ENCODE measurements at regions of chr16 and their contacts with region 1.

Region 1: DNA sequence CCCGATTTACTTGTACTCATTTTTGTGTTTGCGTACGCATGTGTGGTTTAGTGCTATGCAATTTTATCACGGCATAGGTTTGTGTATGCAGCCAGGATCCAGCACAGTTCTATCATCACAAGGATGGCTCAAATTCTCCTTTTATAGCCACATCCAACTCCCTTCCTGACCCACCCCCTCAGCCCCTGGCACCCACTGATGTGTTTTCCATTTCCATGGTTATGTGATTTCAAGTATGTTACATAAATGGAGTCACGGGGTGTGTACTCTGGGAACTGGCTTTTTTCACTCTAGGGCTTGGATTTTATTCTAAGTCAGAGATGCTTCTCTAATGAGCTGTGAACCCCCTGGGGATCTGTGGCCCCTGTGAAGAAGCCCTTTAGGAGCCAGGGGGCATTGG is 16.8 kb downstream of the IL4R start:
- DNase-seq: peak; percentile 97
- H3K4me3 ChIP-seq: no peak overlapping the region
- H3K27ac ChIP-seq: peak overlapping the region; percentile 96 to 99 (median 99)
- H3K4me1 ChIP-seq: peaks cover 0 to 97% (median 81%) of the 10 kb centered on the region in 4 donors
- H3K27me3 ChIP-seq: no peaks in the 10 kb centered on the region
- CTCF ChIP-seq: no peak
- EP300 ChIP-seq: peak; percentile 89 to 99 (median 95)
- POLR2A ChIP-seq: no peak

Region 2: GRCh38 chr16:27066668-27067537 is 263.6 kb before region 1 on chr16 and contains the start of gene C16orf82:
- intact Hi-C with region 1: no loop called
- DNase-seq: no peak
- H3K4me3 ChIP-seq: no peak within 1 kb of the TSS
- H3K27ac ChIP-seq: no peak within 1 kb of the TSS
- H3K4me1 ChIP-seq: no peaks in the 10 kb centered on the region
- H3K27me3 ChIP-seq: peaks cover 0 to 8% (median 0%) of the 10 kb centered on the region in 3 donors
- CTCF ChIP-seq: no peak
- EP300 ChIP-seq: no peak
- POLR2A ChIP-seq: no peak
- total RNA-seq, gene C16orf82: not detected

Region 3: GRCh38 chr16:27242868-27243590 is 87.5 kb before region 1 on chr16:
- intact Hi-C with region 1: loop called (anchors 5 kb)
- DNase-seq: peak; percentile 73
- H3K4me3 ChIP-seq: peak overlapping the region; percentile 6 to 39 (median 26)
- H3K27ac ChIP-seq: peak overlapping the region; percentile 75 to 86 (median 84)
- H3K4me1 ChIP-seq: peaks cover 0 to 75% (median 62%) of the 10 kb centered on the region in 4 donors
- H3K27me3 ChIP-seq: no peaks in the 10 kb centered on the region
- CTCF ChIP-seq: peak in 1 of 4 experiments; percentile 16
- EP300 ChIP-seq: peak in 1 of 4 donors; percentile 19
- POLR2A ChIP-seq: peak in 1 of 2 donors; percentile 20

Measured in sigmoid colon (tissue), 7 donors.